PC-9 (cell line): ENCODE measurements at regions of chr1 and their contacts with region 1.

Region 1: GRCh38 chr1:237386362-237387143 is 344.6 kb downstream of the RYR2 start:
- DNase-seq: no peak
- H3K4me3 ChIP-seq: no peak overlapping the region
- H3K27ac ChIP-seq: no peak overlapping the region
- H3K4me1 ChIP-seq: no peaks in the 10 kb centered on the region
- H3K27me3 ChIP-seq: peaks cover 34% of the 10 kb centered on the region
- CTCF ChIP-seq: peak; percentile 79

Region 2: GRCh38 chr1:236103646-236104218 is 1282.8 kb before region 1 on chr1:
- CTCF ChIA-PET with region 1: interaction called, 8 read pairs
- POLR2A ChIA-PET with region 1: no interaction called
- intact Hi-C with region 1: loop called (anchors 2 kb)
- DNase-seq: peak in 1 of 2 experiments; percentile 41
- H3K4me3 ChIP-seq: no peak overlapping the region
- H3K27ac ChIP-seq: no peak overlapping the region
- H3K4me1 ChIP-seq: no peaks in the 10 kb centered on the region
- H3K27me3 ChIP-seq: no peaks in the 10 kb centered on the region
- CTCF ChIP-seq: peak; percentile 96

Region 3: DNA sequence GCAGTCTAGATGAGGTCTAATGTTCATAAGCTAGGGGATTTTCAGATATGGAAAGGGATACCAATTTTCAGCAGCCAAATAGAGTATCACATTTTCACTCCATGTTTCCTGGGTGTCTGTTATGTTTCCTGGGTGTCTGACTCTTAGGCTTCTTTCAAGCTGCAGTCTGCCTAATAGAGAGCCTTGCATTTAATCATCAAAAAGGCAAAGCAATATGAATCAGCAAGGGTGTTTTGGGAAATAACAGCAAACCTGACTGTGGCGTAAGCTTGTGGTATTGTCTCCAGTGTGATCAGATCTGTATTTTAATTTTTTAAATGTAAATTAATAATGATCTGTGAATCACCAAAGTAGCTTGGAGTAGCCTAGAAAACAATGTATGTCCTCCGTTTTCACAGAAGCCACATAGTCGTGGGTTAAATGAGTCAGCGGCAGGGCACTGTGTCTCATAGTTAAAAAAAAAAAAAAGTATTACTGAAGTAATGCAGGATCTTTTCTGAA is 852.4 kb before region 1 on chr1:
- CTCF ChIA-PET with region 1: no interaction called
- POLR2A ChIA-PET with region 1: no interaction called
- intact Hi-C with region 1: loop called (anchors 5 kb)
- DNase-seq: peak in 1 of 2 experiments; percentile 74
- H3K4me3 ChIP-seq: no peak overlapping the region
- H3K27ac ChIP-seq: peak overlapping the region; percentile 69
- H3K4me1 ChIP-seq: peaks cover 52% of the 10 kb centered on the region
- H3K27me3 ChIP-seq: no peaks in the 10 kb centered on the region
- CTCF ChIP-seq: no peak

Region 4: DNA sequence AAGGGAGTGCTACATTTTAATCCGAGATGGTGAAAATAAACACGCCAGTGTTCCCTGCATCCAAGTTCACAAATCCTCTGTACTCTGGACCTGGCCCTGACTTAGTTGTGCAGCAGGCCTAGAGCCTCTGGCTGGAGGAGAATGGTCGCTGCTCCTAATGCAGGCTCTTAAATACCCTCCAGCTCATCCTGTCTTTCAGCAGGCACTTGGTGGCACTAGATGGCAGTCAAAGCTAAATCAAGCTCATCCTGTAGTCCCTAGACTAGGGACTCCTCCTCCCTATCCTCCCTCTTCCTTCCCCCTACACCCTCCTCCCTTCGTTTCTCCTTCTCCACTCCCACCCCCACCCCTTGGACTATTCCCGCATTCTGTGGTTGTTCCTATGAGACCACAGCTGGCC is 633.0 kb before region 1 on chr1:
- CTCF ChIA-PET with region 1: no interaction called
- POLR2A ChIA-PET with region 1: no interaction called
- intact Hi-C with region 1: loop called (anchors 2 kb)
- DNase-seq: peak in 1 of 2 experiments; percentile 41
- H3K4me3 ChIP-seq: no peak overlapping the region
- H3K27ac ChIP-seq: no peak overlapping the region
- H3K4me1 ChIP-seq: no peaks in the 10 kb centered on the region
- H3K27me3 ChIP-seq: peaks cover 85% of the 10 kb centered on the region
- CTCF ChIP-seq: peak; percentile 51; the same call in 1 of the 2 replicates

Region 5: DNA sequence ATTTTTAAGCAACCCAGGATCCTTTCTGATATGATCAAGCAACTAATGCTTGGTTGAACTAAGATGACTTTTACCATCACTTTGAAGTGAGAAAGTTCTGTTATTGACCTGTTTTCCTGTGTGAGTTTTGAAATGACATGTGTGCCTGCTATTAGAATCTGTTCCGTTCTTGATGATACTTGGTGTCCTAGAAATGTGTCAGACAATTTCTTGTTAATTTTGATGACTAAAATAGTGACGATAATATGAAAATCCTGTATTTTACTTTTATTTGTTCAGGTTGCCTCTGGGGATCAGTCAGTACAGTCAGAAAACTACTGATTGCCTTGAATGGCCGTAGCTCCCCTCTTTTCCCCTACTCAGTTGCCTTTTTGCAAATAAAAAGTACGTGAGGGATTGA is 116.6 kb before region 1 on chr1:
- CTCF ChIA-PET with region 1: no interaction called
- POLR2A ChIA-PET with region 1: no interaction called
- intact Hi-C with region 1: no loop called
- DNase-seq: no peak
- H3K4me3 ChIP-seq: no peak overlapping the region
- H3K27ac ChIP-seq: no peak overlapping the region
- H3K4me1 ChIP-seq: no peaks in the 10 kb centered on the region
- H3K27me3 ChIP-seq: 0 out of 2 replicates have a peak, but pooled peaks cover 17% of the 10 kb centered on the region
- CTCF ChIP-seq: no peak

Region 6: DNA sequence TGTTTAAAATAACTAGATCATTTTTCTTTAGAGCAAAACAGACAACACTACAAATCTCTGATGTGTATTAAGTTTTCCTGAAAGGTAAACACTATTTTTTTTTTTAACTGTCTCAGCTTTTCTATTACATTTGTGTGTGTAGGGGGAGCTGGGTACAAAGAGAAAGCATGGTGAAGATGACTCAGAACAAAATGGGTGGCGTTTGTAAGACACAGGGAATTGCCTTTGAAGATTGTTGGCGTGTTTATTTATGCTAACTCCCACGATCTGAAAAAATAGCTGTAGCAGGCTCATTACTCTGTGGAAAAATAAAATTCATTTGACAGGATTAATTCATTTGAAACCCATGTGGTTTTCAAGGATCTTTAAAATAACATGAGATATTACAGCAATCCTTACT is 59.5 kb before region 1 on chr1:
- CTCF ChIA-PET with region 1: no interaction called
- POLR2A ChIA-PET with region 1: no interaction called
- intact Hi-C with region 1: no loop called
- DNase-seq: no peak
- H3K4me3 ChIP-seq: no peak overlapping the region
- H3K27ac ChIP-seq: no peak overlapping the region
- H3K4me1 ChIP-seq: no peaks in the 10 kb centered on the region
- H3K27me3 ChIP-seq: peaks cover 24% of the 10 kb centered on the region
- CTCF ChIP-seq: no peak

Region 7: DNA sequence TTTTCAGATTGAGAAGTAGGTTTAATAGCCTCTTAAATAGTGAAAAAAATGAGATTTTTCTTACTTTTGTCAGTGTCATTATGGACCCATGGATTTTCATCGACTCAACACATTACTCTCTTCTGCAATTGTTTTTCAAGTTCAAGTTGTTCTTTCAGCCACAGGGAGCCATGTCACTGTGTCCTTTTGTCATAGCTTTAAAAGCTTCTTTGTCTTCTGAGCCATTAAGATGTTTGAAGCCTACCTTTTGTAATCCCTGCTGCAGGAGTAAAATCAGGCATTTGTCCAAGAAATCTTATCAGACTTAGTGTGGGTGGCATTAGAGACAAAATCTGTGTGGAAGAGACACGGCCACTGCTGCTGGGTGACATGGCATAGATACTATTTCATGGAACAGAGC is 596.9 kb after region 1 on chr1:
- CTCF ChIA-PET with region 1: no interaction called
- POLR2A ChIA-PET with region 1: no interaction called
- intact Hi-C with region 1: no loop called
- DNase-seq: no peak
- H3K4me3 ChIP-seq: no peak overlapping the region
- H3K27ac ChIP-seq: no peak overlapping the region
- H3K4me1 ChIP-seq: no peaks in the 10 kb centered on the region
- H3K27me3 ChIP-seq: no peaks in the 10 kb centered on the region
- CTCF ChIP-seq: no peak

Region 8: DNA sequence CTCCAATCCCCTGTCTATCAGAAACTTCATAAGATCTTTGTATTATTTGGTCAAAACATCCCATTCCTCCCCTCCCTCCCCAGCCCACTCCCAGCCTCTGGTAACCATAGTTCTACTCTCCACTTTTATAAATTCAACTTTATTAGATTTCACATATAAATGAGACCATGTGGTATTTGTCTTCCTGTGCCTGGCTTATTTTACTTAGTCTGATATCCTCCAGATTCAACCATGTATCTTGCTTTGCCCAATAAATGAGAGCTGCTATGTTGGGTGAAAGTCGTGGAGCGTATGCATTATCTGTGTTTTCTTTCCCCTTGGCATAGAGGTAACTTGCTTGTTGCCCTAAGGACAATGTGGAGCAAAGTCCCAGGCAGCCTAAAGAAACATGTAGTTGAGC is 1971.3 kb after region 1 on chr1:
- CTCF ChIA-PET with region 1: interaction called, 20 read pairs
- POLR2A ChIA-PET with region 1: no interaction called
- intact Hi-C with region 1: no loop called
- DNase-seq: no peak
- H3K4me3 ChIP-seq: no peak overlapping the region
- H3K27ac ChIP-seq: no peak overlapping the region
- H3K4me1 ChIP-seq: no peaks in the 10 kb centered on the region
- H3K27me3 ChIP-seq: no peaks in the 10 kb centered on the region
- CTCF ChIP-seq: no peak